HCT116 (cell line): ENCODE measurements at regions of chr13 and their contacts with region 1.

Region 1: DNA sequence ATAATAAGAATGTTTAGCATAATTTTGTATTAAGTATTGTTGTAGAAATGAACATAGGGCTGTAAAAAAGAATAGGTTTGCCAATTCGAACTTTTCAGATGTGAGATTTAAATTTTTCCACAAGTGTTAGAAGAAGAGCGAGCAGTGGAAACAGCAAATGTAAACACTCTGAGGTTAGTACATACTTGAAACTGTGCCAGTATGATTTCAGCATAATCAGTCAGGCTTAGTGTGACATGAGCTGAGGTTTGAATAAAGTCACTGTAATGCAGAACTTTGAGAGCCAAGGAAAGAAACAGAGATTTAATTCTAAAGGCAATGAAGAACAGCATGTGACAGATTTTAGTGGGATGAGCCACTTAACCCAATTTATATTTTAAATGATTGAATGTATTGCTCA is 2166.4 kb downstream of the PCDH9 start:
- DNase-seq: no peak
- ATAC-seq: no peak
- H3K4me3 ChIP-seq: no peak overlapping the region
- H3K27ac ChIP-seq: no peak overlapping the region
- H3K4me1 ChIP-seq: no peaks in the 10 kb centered on the region
- H3K27me3 ChIP-seq: no peaks in the 10 kb centered on the region
- CTCF ChIP-seq: no peak
- POLR2A ChIP-seq: no peak
- RAD21 ChIP-seq: no peak

Region 2: DNA sequence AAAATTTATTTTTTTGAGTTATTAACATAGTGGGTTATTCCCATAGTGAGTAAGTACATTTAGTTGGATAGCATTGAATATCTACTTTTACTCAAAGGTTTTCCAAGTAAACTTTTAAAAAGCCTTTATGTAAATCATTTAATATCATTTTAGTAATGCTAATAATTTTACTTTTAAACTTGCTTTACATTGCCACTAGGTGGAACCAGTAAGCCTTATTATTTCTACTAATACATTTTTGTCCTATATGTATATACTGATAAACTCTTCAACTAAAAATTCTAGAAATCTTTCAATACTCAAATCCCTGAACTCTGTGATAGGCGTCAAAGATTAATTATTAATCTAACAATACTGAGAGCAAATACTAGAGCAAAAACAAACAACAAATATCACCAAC is 1938.9 kb before region 1 on chr13:
- CTCF ChIA-PET with region 1: no interaction called
- POLR2A ChIA-PET with region 1: no interaction called
- RAD21 ChIA-PET with region 1: no interaction called
- intact Hi-C with region 1: loop called (anchors 5 kb)
- DNase-seq: peak; percentile 18
- ATAC-seq: no peak
- H3K4me3 ChIP-seq: no peak overlapping the region
- H3K27ac ChIP-seq: no peak overlapping the region
- H3K4me1 ChIP-seq: no peaks in the 10 kb centered on the region
- H3K27me3 ChIP-seq: no peaks in the 10 kb centered on the region
- CTCF ChIP-seq: peak; percentile 16 to 54 (median 23); a peak in 5 of 6 replicates
- POLR2A ChIP-seq: no peak
- RAD21 ChIP-seq: peak; percentile 52

Region 3: GRCh38 chr13:64471916-64472315 is 591.8 kb before region 1 on chr13:
- CTCF ChIA-PET with region 1: interaction called, 8 read pairs
- POLR2A ChIA-PET with region 1: no interaction called
- RAD21 ChIA-PET with region 1: no interaction called
- intact Hi-C with region 1: loop called (anchors 1 kb)
- DNase-seq: peak; percentile 8
- ATAC-seq: peak; percentile 74
- H3K4me3 ChIP-seq: no peak overlapping the region
- H3K27ac ChIP-seq: no peak overlapping the region
- H3K4me1 ChIP-seq: no peaks in the 10 kb centered on the region
- H3K27me3 ChIP-seq: no peaks in the 10 kb centered on the region
- CTCF ChIP-seq: peak; percentile 23 to 53 (median 23); a peak in 4 of 6 replicates
- POLR2A ChIP-seq: no peak
- RAD21 ChIP-seq: peak; percentile 64

Region 4: GRCh38 chr13:64819081-64819480 is 244.7 kb before region 1 on chr13:
- CTCF ChIA-PET with region 1: no interaction called
- POLR2A ChIA-PET with region 1: no interaction called
- RAD21 ChIA-PET with region 1: no interaction called
- intact Hi-C with region 1: loop called (anchors 5 kb)
- DNase-seq: no peak
- ATAC-seq: no peak
- H3K4me3 ChIP-seq: no peak overlapping the region
- H3K27ac ChIP-seq: no peak overlapping the region
- H3K4me1 ChIP-seq: no peaks in the 10 kb centered on the region
- H3K27me3 ChIP-seq: no peaks in the 10 kb centered on the region
- CTCF ChIP-seq: no peak
- POLR2A ChIP-seq: no peak
- RAD21 ChIP-seq: peak; percentile 18; the same call in 1 of the 2 replicates

Region 5: GRCh38 chr13:64958106-64958505 is 105.6 kb before region 1 on chr13:
- CTCF ChIA-PET with region 1: no interaction called
- POLR2A ChIA-PET with region 1: no interaction called
- RAD21 ChIA-PET with region 1: no interaction called
- intact Hi-C with region 1: no loop called
- DNase-seq: no peak
- ATAC-seq: no peak
- H3K4me3 ChIP-seq: no peak overlapping the region
- H3K27ac ChIP-seq: no peak overlapping the region
- H3K4me1 ChIP-seq: no peaks in the 10 kb centered on the region
- H3K27me3 ChIP-seq: no peaks in the 10 kb centered on the region
- CTCF ChIP-seq: no peak
- POLR2A ChIP-seq: no peak
- RAD21 ChIP-seq: no peak

Region 6: DNA sequence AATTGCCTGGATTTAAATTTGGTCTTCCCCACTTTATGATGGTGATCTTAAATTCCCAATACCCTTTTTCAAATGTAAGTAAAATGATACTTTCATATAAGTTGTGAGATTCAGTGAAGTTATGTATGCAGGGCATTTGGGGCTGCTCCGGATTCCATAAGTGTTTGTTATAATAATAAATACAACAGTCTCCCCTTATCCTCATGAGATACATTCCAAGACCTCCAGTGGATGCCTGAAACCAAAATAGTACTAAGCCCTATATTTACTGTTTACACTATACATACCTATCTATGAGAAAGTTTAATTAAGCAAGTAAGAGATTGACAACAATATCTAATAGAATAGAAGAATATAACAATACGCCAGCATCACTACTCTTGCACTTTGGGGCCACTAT is 71.4 kb before region 1 on chr13:
- CTCF ChIA-PET with region 1: no interaction called
- POLR2A ChIA-PET with region 1: no interaction called
- RAD21 ChIA-PET with region 1: no interaction called
- intact Hi-C with region 1: no loop called
- DNase-seq: no peak
- ATAC-seq: no peak
- H3K4me3 ChIP-seq: no peak overlapping the region
- H3K27ac ChIP-seq: no peak overlapping the region
- H3K4me1 ChIP-seq: no peaks in the 10 kb centered on the region
- H3K27me3 ChIP-seq: no peaks in the 10 kb centered on the region
- CTCF ChIP-seq: no peak
- POLR2A ChIP-seq: no peak
- RAD21 ChIP-seq: no peak